ENCODE measurements at regions of chr6 and their contacts with region 1.

Region 1: GRCh38 chr6:83067448-83068413 is at the start of gene DOP1A:
- DNase-seq: peak; percentile 94 to 95 (median 94)
- H3K4me3 ChIP-seq: peak within 1 kb of the TSS; percentile 30 to 84
- H3K4me3 Mint-ChIP-seq: peak within 1 kb of the TSS; percentile 86 to 99 (median 95)
- H3K27ac ChIP-seq: peak within 1 kb of the TSS; percentile 98
- H3K27ac Mint-ChIP-seq: peak within 1 kb of the TSS; percentile 92 to 97 (median 96)
- H3K4me1 ChIP-seq: peaks cover 31% of the 10 kb centered on the region
- H3K4me1 Mint-ChIP-seq: peaks cover 24 to 54% (median 41%) of the 10 kb centered on the region in 4 donors
- H3K27me3 ChIP-seq: no peaks in the 10 kb centered on the region
- H3K27me3 Mint-ChIP-seq: no peaks in the 10 kb centered on the region
- total RNA-seq, gene DOP1A: 32.5 to 36.6 TPM

Region 2: GRCh38 chr6:81752138-81752920 is 1315.4 kb before region 1 on chr6 and contains the start of gene TENT5A:
- CTCF ChIA-PET with region 1: interaction called, 4 read pairs
- POLR2A ChIA-PET with region 1: interaction called, 4 read pairs
- intact Hi-C with region 1: loop called (anchors 5 kb)
- DNase-seq: peak; percentile 82 to 89 (median 84)
- H3K4me3 ChIP-seq: peak within 1 kb of the TSS; percentile 76 to 81
- H3K4me3 Mint-ChIP-seq: peak within 1 kb of the TSS; percentile 94 to 98 (median 96)
- H3K27ac ChIP-seq: peak within 1 kb of the TSS; percentile 66
- H3K27ac Mint-ChIP-seq: peak within 1 kb of the TSS; percentile 89 to 96 (median 94)
- H3K4me1 ChIP-seq: peaks cover 19% of the 10 kb centered on the region
- H3K4me1 Mint-ChIP-seq: peaks cover 18 to 49% (median 33%) of the 10 kb centered on the region in 4 donors
- H3K27me3 ChIP-seq: no peaks in the 10 kb centered on the region
- H3K27me3 Mint-ChIP-seq: peaks cover 5 to 11% of the 10 kb centered on the region in 2 donors
- total RNA-seq, gene TENT5A: 5.8 to 6.6 TPM

Region 3: GRCh38 chr6:83047065-83047754 is 20.5 kb before region 1 on chr6:
- CTCF ChIA-PET with region 1: interaction called, 146 read pairs
- POLR2A ChIA-PET with region 1: no interaction called
- intact Hi-C with region 1: no loop called
- DNase-seq: no peak
- H3K4me3 ChIP-seq: no peak overlapping the region
- H3K4me3 Mint-ChIP-seq: no peak overlapping the region
- H3K27ac ChIP-seq: no peak overlapping the region
- H3K27ac Mint-ChIP-seq: no peak overlapping the region
- H3K4me1 ChIP-seq: no peaks in the 10 kb centered on the region
- H3K4me1 Mint-ChIP-seq: no peaks in the 10 kb centered on the region
- H3K27me3 ChIP-seq: no peaks in the 10 kb centered on the region
- H3K27me3 Mint-ChIP-seq: no peaks in the 10 kb centered on the region

Region 4: DNA sequence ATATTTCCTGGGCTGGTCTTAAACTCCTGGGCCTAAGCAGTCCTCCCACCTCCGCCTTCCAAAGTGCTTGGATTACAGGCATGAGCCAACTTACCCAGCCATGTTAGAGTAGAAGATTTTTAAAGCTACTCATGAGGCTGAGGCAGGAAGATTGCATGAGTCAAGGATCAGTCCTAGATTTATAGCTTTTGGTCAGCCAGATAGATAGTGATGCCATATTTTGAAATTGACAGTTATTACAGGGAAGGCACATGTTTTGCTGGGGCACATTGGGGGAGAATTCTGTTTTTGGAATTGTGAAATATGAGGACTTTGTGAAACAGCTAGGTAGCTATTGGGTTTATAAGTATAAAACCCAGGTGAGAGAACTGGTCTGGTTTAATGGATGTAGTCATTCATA is 40.6 kb after region 1 on chr6:
- CTCF ChIA-PET with region 1: interaction called, 14 read pairs
- POLR2A ChIA-PET with region 1: no interaction called
- intact Hi-C with region 1: no loop called
- DNase-seq: no peak
- H3K4me3 ChIP-seq: no peak overlapping the region
- H3K4me3 Mint-ChIP-seq: no peak overlapping the region
- H3K27ac ChIP-seq: no peak overlapping the region
- H3K27ac Mint-ChIP-seq: no peak overlapping the region
- H3K4me1 ChIP-seq: no peaks in the 10 kb centered on the region
- H3K4me1 Mint-ChIP-seq: no peaks in the 10 kb centered on the region
- H3K27me3 ChIP-seq: no peaks in the 10 kb centered on the region
- H3K27me3 Mint-ChIP-seq: no peaks in the 10 kb centered on the region

Region 5: GRCh38 chr6:83192871-83193746 is 125.4 kb after region 1 on chr6 and contains the starts of genes PGM3 and RWDD2A:
- CTCF ChIA-PET with region 1: interaction called, 108 read pairs
- POLR2A ChIA-PET with region 1: interaction called, 11 read pairs
- intact Hi-C with region 1: loop called (anchors 1 kb)
- DNase-seq: peak; percentile 87 to 90 (median 90)
- H3K4me3 ChIP-seq: peak within 1 kb of the TSS; percentile 65 to 71
- H3K4me3 Mint-ChIP-seq: peak within 1 kb of the TSS; percentile 96 to 99 (median 98)
- H3K27ac ChIP-seq: peak within 1 kb of the TSS; percentile 88
- H3K27ac Mint-ChIP-seq: peak within 1 kb of the TSS; percentile 87 to 99 (median 98)
- H3K4me1 ChIP-seq: peaks cover 21% of the 10 kb centered on the region
- H3K4me1 Mint-ChIP-seq: peaks cover 32 to 66% (median 49%) of the 10 kb centered on the region in 4 donors
- H3K27me3 ChIP-seq: no peaks in the 10 kb centered on the region
- H3K27me3 Mint-ChIP-seq: no peaks in the 10 kb centered on the region
- total RNA-seq, gene PGM3: 35.9 to 39.9 TPM
- total RNA-seq, gene RWDD2A: 5.0 to 5.2 TPM

Region 6: GRCh38 chr6:83221889-83222479 is 154.3 kb after region 1 on chr6:
- CTCF ChIA-PET with region 1: interaction called, 186 read pairs
- POLR2A ChIA-PET with region 1: interaction called, 18 read pairs
- intact Hi-C with region 1: no loop called
- DNase-seq: peak in 4 of 5 donors; percentile 10 to 27 (median 19)
- H3K4me3 ChIP-seq: no peak overlapping the region
- H3K4me3 Mint-ChIP-seq: no peak overlapping the region
- H3K27ac ChIP-seq: no peak overlapping the region
- H3K27ac Mint-ChIP-seq: no peak overlapping the region
- H3K4me1 ChIP-seq: no peaks in the 10 kb centered on the region
- H3K4me1 Mint-ChIP-seq: no peaks in the 10 kb centered on the region
- H3K27me3 ChIP-seq: no peaks in the 10 kb centered on the region
- H3K27me3 Mint-ChIP-seq: peaks cover 0 to 1% of the 10 kb centered on the region in 2 donors

Region 7: GRCh38 chr6:84227434-84228197 is 1159.9 kb after region 1 on chr6 and contains the start of gene CEP162:
- CTCF ChIA-PET with region 1: interaction called, 4 read pairs
- POLR2A ChIA-PET with region 1: no interaction called
- intact Hi-C with region 1: loop called (anchors 1 kb)
- DNase-seq: peak; percentile 89 to 94 (median 91)
- H3K4me3 ChIP-seq: peak within 1 kb of the TSS; percentile 94 to 95
- H3K4me3 Mint-ChIP-seq: peak within 1 kb of the TSS; percentile 96 to 100 (median 98)
- H3K27ac ChIP-seq: peak within 1 kb of the TSS; percentile 69
- H3K27ac Mint-ChIP-seq: peak within 1 kb of the TSS; percentile 90 to 98 (median 96)
- H3K4me1 ChIP-seq: peaks cover 17% of the 10 kb centered on the region
- H3K4me1 Mint-ChIP-seq: peaks cover 8 to 32% (median 19%) of the 10 kb centered on the region in 4 donors
- H3K27me3 ChIP-seq: no peaks in the 10 kb centered on the region
- H3K27me3 Mint-ChIP-seq: peaks cover 5 to 6% of the 10 kb centered on the region in 2 donors
- total RNA-seq, gene CEP162: 10.3 to 10.4 TPM